Activated CD4-positive, alpha-beta T cell treated with anti-CD3 and anti-CD28 coated beads, Interleukin-2, amount 10 ng/mL, durations not matched to agents 24 days and 14 days (primary cell): ENCODE measurements at regions of chr12 and their contacts with region 1.

Region 1: DNA sequence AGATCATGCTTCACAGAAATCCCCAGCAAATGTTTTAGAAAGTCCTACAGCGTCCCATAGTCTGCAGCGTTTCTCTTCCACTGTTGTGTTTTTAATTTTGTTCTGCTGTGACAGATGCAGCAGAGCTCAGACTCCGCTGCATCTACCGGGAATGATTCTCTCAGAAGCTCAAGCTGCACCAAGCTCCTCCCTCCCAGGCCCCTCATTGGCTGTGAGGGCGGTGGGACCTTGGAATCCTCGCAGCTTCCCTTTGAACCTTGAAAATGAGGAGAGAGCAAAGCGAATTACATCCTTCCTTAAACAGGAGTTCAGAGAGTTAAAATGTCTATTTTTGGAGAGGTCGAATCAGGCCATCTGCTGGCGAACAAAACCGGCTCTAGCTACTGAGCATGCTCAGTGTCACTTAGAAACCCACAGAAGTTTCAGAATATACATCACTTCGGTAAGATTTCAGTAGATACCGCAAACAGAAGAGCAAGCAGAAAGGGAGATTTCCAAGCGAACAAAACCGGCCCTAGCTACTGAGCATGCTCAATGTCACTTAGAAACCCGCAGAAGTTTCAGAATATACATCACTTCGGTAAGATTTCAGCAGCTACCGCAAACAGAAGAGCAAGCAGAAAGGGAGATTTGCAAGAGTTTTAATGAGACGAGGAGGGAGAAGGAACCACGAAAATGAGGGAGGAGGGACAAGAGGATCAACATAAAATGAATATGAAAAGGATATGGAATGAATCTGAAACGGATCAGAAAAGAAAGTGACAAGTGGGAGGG is at the start of gene ABCD2:
- DNase-seq: peak; percentile 93
- H3K4me3 Mint-ChIP-seq: no peak within 1 kb of the TSS
- H3K27ac Mint-ChIP-seq: no peak within 1 kb of the TSS
- H3K4me1 Mint-ChIP-seq: peaks cover 30% of the 10 kb centered on the region
- H3K27me3 Mint-ChIP-seq: no peaks in the 10 kb centered on the region
- total RNA-seq, gene ABCD2: 7.0 and 7.4 TPM in 2 replicates

Region 2: DNA sequence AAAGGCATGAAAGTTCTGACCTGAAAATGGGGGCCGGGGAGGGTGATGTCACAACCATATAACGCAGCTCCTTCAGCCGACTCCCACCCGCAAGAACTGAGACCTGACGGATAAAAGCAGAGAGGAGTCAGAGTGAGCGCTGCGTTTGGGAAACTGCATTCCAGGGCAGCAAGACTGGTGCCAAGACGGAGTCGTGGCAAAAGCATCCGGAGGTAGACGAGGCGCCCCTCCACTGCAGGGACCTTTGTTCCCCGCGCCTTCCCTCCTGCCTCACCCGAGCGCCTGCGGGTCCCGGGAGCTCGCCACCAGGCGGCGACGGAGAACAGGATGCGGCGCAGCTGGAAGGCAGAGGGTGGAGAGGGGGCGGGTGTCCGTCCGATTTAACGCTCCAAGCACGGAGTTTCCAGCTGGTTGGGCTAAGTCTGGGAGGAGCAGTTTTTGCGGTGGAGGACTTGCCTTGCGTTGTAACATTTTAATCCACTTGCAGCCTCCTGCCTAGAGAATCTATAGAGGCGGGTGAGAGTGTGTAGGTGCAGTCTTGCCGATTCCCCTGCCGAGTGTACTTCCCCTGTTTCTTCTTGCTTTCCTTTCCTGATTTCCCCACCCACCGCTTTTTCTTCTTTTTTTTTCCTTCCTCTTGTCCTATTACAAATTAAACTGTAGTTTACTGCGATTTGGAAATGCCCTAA is 713.2 kb before region 1 on chr12:
- intact Hi-C with region 1: loop called (anchors 5 kb)
- DNase-seq: peak; percentile 93
- H3K4me3 Mint-ChIP-seq: peak overlapping the region; percentile 93
- H3K27ac Mint-ChIP-seq: peak overlapping the region; percentile 95
- H3K4me1 Mint-ChIP-seq: peaks cover 32% of the 10 kb centered on the region
- H3K27me3 Mint-ChIP-seq: peaks cover 18% of the 10 kb centered on the region

Region 3: DNA sequence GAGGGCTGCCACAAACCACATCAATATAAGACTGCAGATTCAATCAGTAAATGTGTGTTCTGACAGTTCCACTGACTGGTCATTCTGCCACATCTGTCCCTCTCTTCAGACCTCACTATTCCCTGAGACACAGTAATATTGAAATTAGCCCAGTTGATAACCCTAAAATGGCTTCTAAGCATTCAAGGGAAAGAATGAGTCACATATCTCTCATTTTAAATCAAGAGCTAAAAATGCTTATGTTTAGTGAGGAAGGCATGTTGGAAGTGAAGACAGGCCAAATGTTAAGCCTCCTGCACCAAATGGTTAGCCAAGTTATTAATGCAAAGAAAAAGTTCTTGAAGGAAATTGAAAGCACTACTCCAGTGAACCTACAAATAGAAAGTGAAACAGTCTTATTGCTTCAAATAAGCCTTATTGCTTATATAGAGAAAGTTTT is 152.4 kb before region 1 on chr12:
- intact Hi-C with region 1: loop called (anchors 1 kb)
- DNase-seq: no peak
- H3K4me3 Mint-ChIP-seq: peak overlapping the region; percentile 48
- H3K27ac Mint-ChIP-seq: peak overlapping the region; percentile 13
- H3K4me1 Mint-ChIP-seq: peaks cover 16% of the 10 kb centered on the region
- H3K27me3 Mint-ChIP-seq: no peaks in the 10 kb centered on the region

Region 4: DNA sequence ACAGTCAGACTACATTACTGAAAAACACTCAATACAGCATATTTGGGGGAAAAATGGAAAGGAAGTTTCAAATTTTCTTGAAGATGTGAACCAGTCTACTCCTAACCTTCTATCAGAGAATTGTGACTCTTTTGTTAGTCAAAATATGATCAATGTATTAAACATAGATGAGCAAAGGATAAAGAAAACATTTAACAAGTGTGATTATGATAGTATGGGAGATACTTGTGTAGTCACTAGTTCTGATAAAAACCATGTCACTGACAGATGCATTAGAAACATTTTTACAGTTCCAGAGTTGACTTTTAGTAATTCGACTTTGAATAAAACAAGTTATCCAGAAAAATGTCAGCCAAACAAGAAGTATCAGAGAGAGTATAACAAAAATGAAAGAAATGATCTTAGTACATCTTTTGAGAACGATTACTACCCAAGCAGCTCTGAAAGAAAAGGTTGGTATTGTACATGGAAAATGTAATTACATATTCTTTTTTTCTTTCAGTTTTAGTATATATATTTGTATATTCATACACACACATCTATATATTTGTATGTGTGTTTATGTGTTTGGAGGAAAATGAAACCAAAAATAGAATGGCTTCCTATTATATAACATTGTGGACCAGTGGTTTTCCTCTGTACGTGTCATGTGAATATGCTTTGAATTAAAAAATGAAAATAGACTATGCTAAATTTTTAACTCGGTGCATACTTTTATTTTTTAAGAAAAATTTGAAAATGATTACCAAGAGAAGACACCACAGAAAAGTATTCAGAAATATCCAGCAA is 63.0 kb after region 1 on chr12:
- intact Hi-C with region 1: loop called (anchors 1 kb)
- DNase-seq: no peak
- H3K4me3 Mint-ChIP-seq: peak overlapping the region; percentile 78
- H3K27ac Mint-ChIP-seq: peak overlapping the region; percentile 78
- H3K4me1 Mint-ChIP-seq: peaks cover 40% of the 10 kb centered on the region
- H3K27me3 Mint-ChIP-seq: no peaks in the 10 kb centered on the region

Region 5: GRCh38 chr12:40146800-40147797 is 527.3 kb after region 1 on chr12:
- intact Hi-C with region 1: loop called (anchors 10 kb)
- DNase-seq: peak; percentile 70
- H3K4me3 Mint-ChIP-seq: no peak overlapping the region
- H3K27ac Mint-ChIP-seq: no peak overlapping the region
- H3K4me1 Mint-ChIP-seq: no peaks in the 10 kb centered on the region
- H3K27me3 Mint-ChIP-seq: peaks cover 34% of the 10 kb centered on the region